Upper lobe of right lung (tissue), 1 donor: ENCODE measurements at regions of chr19 and their contacts with region 1.

Region 1: DNA sequence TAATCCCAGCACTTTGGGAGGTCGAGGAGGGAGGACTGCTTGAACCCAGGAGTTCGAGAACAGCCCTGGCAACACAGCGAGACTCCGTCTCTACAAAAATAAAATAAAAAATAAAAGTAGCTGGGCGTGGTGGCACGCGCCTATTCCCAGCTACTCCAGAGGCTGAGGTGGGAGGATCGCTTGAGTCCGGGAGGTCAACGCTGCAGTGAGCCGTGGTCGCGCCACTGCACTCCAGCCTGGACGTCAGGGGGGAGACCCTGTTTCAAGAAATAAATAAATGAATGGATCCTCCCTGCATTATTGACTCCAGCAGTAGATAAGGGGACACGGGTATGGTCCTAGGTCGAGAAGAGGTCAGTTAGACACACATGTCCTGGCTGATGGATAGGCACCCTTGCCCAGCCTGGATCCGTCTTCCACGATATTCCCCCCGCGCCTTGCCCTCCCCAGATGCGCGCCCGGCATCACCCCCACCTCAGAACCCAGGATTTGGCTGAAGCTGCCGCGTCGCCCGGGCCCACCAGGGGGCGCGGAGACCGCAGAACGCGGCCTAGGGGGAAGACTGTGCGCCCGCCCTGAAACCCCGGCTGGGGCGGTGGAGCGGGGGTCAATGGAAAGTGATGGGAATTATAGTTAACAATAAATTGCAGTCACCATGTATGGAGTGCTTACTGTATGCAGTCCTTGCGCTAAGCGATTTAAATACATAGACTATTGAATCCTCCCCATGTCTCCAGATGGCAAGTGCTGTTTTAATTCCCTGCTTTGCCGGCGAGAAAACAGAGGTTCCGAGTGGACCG is 2.1 kb upstream of the HOOK2 start:
- DNase-seq: peak; percentile 93
- ATAC-seq: peak; percentile 57
- H3K4me3 ChIP-seq: peak overlapping the region; percentile 72
- H3K27ac ChIP-seq: peak overlapping the region; percentile 93
- H3K4me1 ChIP-seq: peaks cover 24% of the 10 kb centered on the region
- H3K27me3 ChIP-seq: no peaks in the 10 kb centered on the region
- CTCF ChIP-seq: peak; percentile 96

Region 2: GRCh38 chr19:12736995-12737834 is 40.2 kb before region 1 on chr19 and contains the start of gene GET3:
- intact Hi-C with region 1: no loop called
- DNase-seq: peak; percentile 87
- ATAC-seq: peak; percentile 89
- H3K4me3 ChIP-seq: peak within 1 kb of the TSS; percentile 81
- H3K27ac ChIP-seq: peak within 1 kb of the TSS; percentile 93
- H3K4me1 ChIP-seq: peaks cover 36% of the 10 kb centered on the region
- H3K27me3 ChIP-seq: no peaks in the 10 kb centered on the region
- CTCF ChIP-seq: no peak
- total RNA-seq, gene GET3: 55.2 TPM

Region 3: DNA sequence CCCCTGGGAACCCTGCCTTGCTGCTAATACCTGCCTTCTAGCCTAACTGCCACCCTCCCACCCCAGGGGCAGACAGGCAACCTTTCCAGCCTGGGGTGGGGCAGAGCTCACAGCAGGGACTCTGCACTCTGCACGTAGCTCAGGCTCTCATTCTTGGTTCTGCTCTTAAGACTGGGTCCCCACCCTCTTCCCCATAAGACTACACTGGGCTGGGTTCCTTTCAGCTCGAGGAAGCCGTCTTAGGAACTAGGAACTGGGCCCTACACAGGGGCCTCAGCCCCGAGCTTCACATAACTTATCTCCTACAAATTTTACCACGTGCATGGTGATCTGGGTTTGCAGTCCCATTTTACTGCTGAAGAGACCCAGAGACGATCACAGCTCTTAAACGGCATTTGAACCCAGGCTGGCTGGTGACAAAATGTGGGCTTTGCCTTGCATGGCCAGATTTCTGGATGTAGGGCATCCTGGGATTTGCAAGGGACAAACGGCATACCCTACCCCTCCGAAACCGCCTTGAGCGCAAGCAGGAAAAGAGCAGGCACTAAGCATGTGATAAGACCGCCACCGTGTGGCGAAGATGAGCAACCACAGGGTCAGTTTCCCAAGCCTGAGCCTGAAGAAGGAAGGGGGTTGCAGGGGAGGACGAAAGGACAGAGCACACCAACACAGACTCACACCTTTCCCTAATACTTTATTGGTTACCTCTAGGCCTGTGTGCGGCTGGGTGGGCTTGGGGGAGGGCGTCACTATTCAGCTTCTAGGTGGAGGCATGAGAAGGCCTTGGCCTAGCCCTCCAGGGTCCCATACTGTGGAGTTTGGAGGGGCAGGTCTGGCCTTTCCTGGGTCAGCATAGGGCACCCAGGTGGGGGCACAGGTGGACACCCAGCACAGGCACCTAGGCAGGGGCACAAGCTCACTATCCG is 19.0 kb after region 1 on chr19:
- intact Hi-C with region 1: loop called (anchors 2 kb)
- DNase-seq: peak; percentile 84
- ATAC-seq: peak; percentile 46
- H3K4me3 ChIP-seq: peak overlapping the region; percentile 8
- H3K27ac ChIP-seq: peak overlapping the region; percentile 58
- H3K4me1 ChIP-seq: peaks cover 18% of the 10 kb centered on the region
- H3K27me3 ChIP-seq: no peaks in the 10 kb centered on the region
- CTCF ChIP-seq: peak; percentile 92

Region 4: DNA sequence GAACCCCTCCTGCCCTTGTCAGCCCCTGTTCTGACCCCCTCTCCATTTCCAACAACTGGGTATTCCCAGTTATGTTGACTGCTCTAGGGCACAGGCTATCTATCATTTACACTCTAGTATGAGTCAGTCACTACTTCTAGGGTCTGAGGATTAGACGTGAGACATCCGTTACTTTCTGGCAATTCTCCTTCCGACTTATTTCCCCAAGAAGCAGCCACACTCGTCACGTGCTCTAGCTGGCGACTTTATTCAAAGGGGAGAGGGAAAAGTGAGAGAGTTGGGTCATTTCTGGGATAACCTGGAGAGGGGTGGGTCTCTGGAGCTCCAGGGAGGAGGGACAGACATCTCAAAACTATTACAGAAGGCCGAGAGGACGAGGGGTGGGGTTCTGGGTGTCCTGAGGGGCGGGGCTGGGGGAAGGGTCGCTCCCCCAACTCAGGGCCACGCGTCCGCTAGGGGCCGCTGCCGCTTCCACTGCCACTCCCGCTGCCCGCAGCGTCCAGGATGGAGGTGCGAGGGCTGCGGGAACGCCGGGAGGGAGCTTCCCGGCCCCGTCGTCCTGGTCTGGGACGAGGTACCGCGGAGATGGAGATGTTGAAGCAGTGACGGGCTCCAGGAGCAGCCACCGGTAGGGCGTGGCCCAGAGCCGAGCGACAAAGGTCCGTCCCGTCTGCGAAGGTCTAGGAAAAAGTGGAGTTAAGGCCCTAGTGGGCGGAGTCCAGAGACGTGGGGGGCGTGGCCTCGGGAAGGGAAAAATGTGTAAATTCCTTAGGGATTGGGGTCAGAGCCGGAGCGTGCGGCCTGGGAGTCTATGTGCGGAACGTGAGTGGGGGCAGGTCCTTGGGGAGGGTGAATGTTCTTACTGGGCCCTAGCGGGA is 48.1 kb after region 1 on chr19:
- intact Hi-C with region 1: no loop called
- DNase-seq: no peak
- ATAC-seq: peak; percentile 57
- H3K4me3 ChIP-seq: no peak overlapping the region
- H3K27ac ChIP-seq: no peak overlapping the region
- H3K4me1 ChIP-seq: peaks cover 6% of the 10 kb centered on the region
- H3K27me3 ChIP-seq: peaks cover 61% of the 10 kb centered on the region
- CTCF ChIP-seq: peak; percentile 28

Region 5: DNA sequence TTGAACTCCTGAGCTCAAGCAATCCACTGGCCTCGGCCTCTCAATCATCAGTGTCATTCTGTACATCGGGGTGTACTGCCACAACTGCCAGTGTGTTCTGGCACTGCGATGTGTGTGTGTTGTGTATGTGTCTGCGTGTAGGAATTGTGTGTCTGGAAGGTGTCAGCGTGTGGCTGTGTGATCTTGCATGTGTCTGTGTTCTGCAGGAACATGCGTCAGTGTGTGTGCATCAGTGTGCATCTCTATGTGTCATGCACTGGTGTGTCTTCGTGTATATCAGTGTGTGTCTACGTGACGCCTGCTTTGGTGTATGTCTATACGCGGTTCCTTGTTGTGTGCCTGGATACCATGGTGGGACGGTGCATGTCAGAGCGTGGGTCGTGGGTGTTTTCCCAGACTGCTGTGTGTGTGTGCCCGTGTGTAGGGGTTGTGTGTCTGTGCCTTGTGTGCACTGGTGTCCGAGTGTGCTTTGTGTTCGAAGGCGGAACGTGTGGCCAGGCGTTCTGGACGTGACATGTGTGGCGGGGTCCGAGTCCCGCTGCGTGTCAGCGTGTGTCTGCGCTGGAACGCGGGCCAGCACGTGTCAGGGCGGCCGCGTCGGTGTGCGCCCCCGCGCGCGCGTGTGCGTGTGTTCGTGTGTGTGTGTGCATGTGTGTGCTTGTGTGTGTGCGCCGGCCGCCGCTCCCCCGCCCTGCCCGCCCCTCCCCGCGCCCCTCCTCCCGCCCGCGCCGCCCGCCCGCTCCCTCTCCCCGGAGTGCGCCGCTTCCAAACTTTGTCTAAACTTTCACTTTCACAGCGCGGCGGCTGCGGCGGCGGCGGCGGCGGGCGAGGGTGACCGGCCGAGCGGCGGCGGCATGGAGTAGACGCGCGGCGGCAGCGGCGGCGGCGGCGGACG is 217.5 kb after region 1 on chr19 and contains the start of gene NFIX:
- intact Hi-C with region 1: no loop called
- DNase-seq: peak; percentile 87
- ATAC-seq: peak; percentile 58
- H3K4me3 ChIP-seq: peak within 1 kb of the TSS; percentile 71
- H3K27ac ChIP-seq: peak within 1 kb of the TSS; percentile 89
- H3K4me1 ChIP-seq: peaks cover 9% of the 10 kb centered on the region
- H3K27me3 ChIP-seq: no peaks in the 10 kb centered on the region
- CTCF ChIP-seq: no peak
- total RNA-seq, gene NFIX: 168 TPM